Ascending aorta (tissue), 2 donors: ENCODE measurements at regions of chr13 and their contacts with region 1.

Region 1: DNA sequence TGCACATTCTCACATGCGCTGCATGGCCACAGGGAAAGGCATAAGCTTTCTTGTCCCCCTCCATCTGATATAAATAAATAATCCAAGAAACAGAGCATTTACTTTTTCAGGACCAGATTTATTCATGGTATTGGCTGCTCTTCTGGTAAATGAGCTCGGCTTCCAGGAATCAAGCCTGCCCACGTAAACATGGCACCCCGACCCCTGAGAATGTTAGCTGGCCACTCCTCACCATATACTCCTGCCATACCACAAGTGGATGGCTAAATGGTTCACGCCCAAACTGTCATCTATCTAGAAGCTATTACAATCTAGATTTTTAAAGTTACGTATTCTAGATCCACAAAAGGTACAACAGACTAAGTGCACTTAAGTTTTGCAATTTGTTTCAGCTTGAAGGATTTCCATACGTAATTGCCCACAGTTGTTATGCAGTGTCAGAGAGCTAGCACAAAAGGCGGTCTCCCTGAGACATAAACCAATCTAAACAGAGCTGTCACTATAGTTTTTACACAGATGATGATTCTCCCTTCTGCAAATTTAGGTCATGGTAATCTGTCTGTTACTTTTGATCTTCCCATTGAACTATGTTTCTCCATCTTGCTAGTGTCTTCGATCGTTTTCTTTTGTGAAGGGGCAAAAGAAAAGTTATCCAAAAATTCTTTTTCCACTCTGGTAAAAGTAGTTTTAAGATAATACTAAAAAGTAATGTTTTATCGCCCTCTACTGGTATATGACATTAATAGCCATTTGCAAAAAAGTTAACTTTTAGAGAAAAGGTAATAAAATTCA is 16.2 kb upstream of the FOXO1 start:
- DNase-seq: no peak
- H3K4me3 ChIP-seq: no peak overlapping the region
- H3K27ac ChIP-seq: no peak overlapping the region
- H3K4me1 ChIP-seq: peaks cover 0 to 10% of the 10 kb centered on the region in 2 donors
- H3K27me3 ChIP-seq: no peaks in the 10 kb centered on the region
- CTCF ChIP-seq: peak; percentile 55 to 77 (median 61)

Region 2: DNA sequence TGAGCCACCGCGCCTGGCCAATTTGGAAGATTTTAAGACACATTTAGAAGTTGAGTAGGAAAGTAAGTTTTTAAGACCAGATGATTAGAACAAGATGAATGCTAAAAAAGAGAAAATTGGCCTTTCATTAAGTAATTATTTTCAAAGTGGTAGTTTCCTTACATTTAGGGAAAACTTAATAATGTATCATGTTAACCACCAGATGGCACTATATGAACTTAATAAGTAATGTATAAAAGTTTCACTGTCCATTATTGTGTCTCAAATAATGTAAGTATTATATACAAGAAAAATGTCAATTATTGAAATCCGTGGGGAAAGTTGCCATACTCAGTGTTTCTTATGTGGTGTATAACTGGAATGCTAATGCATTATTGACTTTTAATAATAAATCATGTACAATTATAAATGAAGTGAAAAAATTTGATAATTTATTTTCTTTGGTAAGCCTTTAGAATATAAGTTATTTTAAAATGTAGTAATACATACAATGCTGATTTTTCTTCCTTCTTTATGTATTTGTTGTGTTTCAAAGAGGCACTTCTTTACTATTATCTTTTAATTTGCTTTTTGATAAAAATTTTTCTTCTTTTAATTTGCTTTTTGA is 998.0 kb before region 1 on chr13:
- intact Hi-C with region 1: loop called (anchors 2 kb)
- DNase-seq: no peak
- H3K4me3 ChIP-seq: no peak overlapping the region
- H3K27ac ChIP-seq: no peak overlapping the region
- H3K4me1 ChIP-seq: no peaks in the 10 kb centered on the region
- H3K27me3 ChIP-seq: no peaks in the 10 kb centered on the region
- CTCF ChIP-seq: peak; percentile 12 to 44 (median 22)

Region 3: DNA sequence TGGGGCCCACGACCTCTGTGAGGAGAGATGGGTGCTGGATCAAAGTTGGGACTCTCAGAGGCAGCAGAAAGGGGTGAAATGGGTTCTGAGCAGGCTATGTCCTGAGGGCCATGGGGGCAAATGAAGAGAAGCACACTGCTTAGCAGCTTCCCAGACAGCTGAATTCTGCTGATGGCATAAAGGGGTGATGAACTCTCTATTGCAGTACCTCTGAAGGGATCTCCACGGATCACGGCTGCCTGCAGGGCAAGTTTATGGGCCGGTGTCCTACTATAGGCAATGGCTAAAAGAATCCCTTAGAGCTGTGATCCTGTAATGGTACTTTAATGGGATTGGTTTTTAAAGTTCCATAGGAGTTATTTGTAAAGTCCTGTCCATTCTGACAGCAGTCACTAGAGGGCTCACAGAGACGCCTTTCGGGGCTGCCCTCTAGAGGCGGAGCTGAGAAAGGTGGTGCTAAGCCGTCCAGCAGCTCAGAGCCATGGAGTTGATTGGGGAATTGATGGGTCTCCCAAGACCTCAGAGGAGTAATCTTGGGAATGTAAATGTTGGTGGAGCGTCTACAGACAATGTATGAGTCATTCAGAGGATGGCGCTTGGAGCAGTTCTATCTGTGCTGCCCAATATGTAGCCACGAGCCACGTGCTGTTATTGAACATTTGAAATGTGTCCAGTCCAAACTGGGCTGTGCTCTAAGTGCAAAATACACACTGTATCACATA is 739.9 kb before region 1 on chr13:
- intact Hi-C with region 1: loop called (anchors 1 kb)
- DNase-seq: peak in 1 of 2 donors; percentile 83
- H3K4me3 ChIP-seq: no peak overlapping the region
- H3K27ac ChIP-seq: no peak overlapping the region
- H3K4me1 ChIP-seq: no peaks in the 10 kb centered on the region
- H3K27me3 ChIP-seq: no peaks in the 10 kb centered on the region
- CTCF ChIP-seq: peak; percentile 81 to 91 (median 86)

Region 4: GRCh38 chr13:40770934-40771618 is 88.4 kb after region 1 on chr13 and contains the start of gene MRPS31:
- intact Hi-C with region 1: no loop called
- DNase-seq: peak; percentile 81 to 97
- H3K4me3 ChIP-seq: peak within 1 kb of the TSS; percentile 59 to 75
- H3K27ac ChIP-seq: peak within 1 kb of the TSS; percentile 71 to 83
- H3K4me1 ChIP-seq: peaks cover 0 to 6% of the 10 kb centered on the region in 2 donors
- H3K27me3 ChIP-seq: no peaks in the 10 kb centered on the region
- CTCF ChIP-seq: peak in 1 of 3 experiments; percentile 2
- total RNA-seq, gene MRPS31: 22.8 TPM